Right cardiac atrium (tissue), 5 donors: ENCODE measurements at regions of chr12 and their contacts with region 1.

Region 1: DNA sequence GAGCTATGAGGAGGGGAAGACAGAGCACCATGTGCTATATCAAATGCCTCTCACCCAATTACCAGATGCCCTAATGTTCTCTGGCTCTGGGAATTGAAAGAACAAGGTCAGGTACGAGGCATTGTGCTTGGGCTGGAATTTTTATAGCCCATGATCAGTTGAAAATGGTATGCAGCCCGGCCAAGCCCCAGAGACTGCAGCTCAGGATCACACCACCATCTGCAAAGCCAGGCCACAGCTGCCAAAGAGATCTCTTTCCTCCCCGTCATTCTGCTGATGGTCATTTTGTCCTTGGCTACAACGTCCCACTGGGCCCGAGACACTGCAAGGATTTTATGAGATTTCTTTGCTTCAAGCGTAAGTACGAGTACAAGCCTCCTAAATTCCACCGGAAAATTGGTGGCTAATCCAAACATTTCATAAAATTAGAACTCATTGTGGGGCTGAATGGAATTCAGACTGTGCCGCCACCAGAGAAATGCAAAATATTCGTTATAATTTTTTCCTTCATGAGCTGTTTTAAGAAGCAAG is 15.1 kb downstream of the NUAK1 start:
- DNase-seq: peak in 2 of 3 donors; percentile 70 to 77
- ATAC-seq: peak; percentile 61 to 79
- H3K4me3 ChIP-seq: no peak overlapping the region
- H3K27ac ChIP-seq: peak overlapping the region; percentile 65
- H3K4me1 ChIP-seq: peaks cover 43% of the 10 kb centered on the region
- H3K27me3 ChIP-seq: no peaks in the 10 kb centered on the region

Region 2: DNA sequence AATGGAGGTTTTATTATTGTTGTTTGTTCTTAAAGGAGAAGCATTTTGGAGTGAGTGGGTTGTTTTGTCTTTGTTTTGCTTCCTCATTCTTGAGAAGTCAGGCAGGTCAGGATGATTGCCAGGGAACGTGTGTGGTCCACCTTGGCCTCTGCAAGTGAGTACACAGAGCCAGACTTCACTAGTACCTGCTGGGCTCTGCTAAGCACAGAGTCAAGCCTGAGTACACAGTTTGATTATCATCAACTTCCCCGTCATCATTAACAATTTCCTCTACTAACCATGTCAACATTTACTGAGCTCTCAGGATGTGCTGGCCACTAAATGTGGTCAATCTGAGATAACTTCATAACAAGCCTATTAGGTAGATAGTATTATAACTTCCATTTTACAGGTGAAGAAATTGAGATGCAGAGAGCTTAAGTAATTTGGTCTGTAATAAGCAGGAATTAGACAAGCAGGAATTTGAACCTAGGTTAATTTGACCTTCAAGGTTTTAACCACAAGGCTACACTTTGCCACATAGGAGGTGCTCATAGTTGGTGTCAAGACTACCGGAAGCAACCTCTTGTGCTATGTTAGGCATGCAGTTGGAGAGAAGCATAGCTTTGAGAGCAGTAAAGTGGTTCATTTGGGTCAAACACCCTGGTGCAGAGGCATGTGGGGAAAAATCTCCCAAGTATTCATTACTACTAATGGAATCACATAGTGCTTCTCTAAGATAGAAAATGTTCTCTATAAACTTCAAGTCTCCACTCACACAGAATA is 163.1 kb before region 1 on chr12:
- intact Hi-C with region 1: loop called in 1 of 4 experiments (anchors 10 kb)
- DNase-seq: no peak
- ATAC-seq: peak in 1 of 2 donors; percentile 51
- H3K4me3 ChIP-seq: no peak overlapping the region
- H3K27ac ChIP-seq: no peak overlapping the region
- H3K4me1 ChIP-seq: peaks cover 2% of the 10 kb centered on the region
- H3K27me3 ChIP-seq: no peaks in the 10 kb centered on the region

Region 3: GRCh38 chr12:106179086-106179485 is 55.5 kb after region 1 on chr12:
- intact Hi-C with region 1: no loop called
- DNase-seq: no peak
- ATAC-seq: peak; percentile 38 to 50
- H3K4me3 ChIP-seq: no peak overlapping the region
- H3K27ac ChIP-seq: peak overlapping the region; percentile 9
- H3K4me1 ChIP-seq: no peaks in the 10 kb centered on the region
- H3K27me3 ChIP-seq: no peaks in the 10 kb centered on the region